MCF 10A (cell line): ENCODE measurements at regions of chr11 and their contacts with region 1.

Region 1: GRCh38 chr11:62665075-62665598 is at the starts of genes C11orf98 and CSKMT:
- DNase-seq: peak; percentile 92
- H3K4me3 Mint-ChIP-seq: peak within 1 kb of the TSS; percentile 98
- H3K27ac Mint-ChIP-seq: peak within 1 kb of the TSS; percentile 91
- H3K4me1 Mint-ChIP-seq: peaks cover 5% of the 10 kb centered on the region
- H3K27me3 Mint-ChIP-seq: no peaks in the 10 kb centered on the region
- CTCF ChIP-seq: no peak
- total RNA-seq, gene C11orf98: 81.2 and 91.6 TPM in 2 replicates
- total RNA-seq, gene CSKMT: 15.4 and 31.2 TPM in 2 replicates

Region 2: DNA sequence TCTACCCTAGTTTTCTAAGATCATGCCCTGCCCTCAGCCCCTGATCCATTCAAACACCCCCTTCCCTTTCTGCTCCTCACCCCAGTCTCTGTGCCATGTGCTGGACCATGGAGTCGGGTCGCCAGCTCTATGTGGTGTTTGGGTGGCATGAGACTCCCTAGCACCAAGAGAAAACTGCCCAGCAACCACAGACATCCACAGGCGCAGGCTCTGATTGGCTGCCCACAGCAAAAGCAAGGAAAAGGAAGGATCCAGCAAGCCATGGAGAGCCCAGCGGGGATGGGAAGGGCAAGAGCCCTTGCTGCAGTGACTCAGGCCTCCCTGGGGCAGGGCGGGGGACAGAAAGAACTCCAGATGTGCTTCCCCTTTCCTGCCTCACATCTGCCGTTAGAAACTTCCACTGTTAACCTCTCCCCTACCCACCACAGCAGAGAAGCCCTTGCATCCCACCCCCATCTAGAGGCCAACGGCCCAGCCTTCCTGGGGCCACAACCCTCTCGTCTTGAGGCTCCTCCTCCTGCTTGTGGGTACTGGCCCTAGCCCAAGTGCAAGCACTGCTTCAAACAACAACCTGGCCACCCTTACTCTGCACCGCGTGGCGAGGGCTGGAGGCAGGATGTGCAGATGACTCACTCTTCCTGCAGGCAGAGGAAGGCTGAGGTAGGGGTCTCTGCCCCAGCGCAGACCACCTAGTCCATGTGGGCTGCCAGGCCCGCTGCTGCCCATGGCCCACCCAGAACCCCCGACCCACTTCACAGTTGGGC is 108.8 kb before region 1 on chr11:
- CTCF ChIA-PET with region 1: no interaction called
- POLR2A ChIA-PET with region 1: interaction called, 13 read pairs
- intact Hi-C with region 1: no loop called
- DNase-seq: peak; percentile 97
- H3K4me3 Mint-ChIP-seq: peak overlapping the region; percentile 70
- H3K27ac Mint-ChIP-seq: peak overlapping the region; percentile 95
- H3K4me1 Mint-ChIP-seq: peaks cover 66% of the 10 kb centered on the region
- H3K27me3 Mint-ChIP-seq: no peaks in the 10 kb centered on the region
- CTCF ChIP-seq: no peak

Region 3: DNA sequence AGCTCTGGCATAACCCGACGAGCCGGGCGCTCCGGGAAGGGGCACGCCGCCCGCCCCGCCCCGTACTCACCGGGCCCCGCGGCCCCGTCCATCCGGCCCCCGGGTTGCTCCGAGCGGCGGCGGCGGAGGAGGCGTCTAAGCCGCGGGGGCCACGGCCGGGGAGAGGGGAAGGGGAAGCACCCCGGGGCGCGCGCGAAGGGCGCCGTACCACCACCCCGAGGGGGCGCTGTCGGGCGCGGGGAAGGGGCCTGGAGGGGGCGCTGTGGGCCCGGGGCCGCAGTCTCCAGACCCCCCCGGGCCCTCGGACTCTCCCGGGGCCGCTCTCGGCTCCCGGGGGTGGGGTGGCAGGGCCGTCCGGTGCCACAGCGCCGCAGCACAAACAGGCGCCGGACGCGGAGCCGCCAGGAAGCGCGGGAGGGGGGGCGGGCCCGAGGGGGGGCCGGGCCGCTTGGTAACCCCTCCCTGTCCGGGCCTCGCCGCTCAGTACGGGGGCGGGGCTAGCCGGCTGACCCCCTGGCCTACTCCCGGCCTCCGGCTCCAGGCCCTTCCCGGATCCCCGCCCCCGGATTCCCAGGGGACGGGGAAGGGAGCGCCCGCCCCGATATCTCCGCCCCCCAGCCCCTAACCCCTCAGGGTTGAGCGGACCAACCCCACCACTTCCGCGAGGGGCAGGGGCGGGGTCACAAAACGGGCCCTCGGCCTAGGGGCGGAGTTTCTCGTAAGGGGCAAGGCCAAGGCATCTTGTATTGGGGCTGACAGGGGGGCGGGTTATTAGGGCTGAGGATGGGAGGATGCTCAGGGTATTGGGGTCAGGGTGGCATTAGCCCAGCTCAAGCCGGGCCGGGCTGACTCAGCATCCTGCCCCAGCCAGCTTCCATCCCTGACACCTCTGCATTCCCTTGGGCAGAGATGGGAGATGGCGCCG is 52.5 kb before region 1 on chr11 and contains the starts of genes EML3 and ROM1:
- CTCF ChIA-PET with region 1: interaction called, 3 read pairs
- POLR2A ChIA-PET with region 1: interaction called, 14 read pairs
- intact Hi-C with region 1: no loop called
- DNase-seq: peak; percentile 89
- H3K4me3 Mint-ChIP-seq: peak within 1 kb of the TSS; percentile 90
- H3K27ac Mint-ChIP-seq: peak within 1 kb of the TSS; percentile 80
- H3K4me1 Mint-ChIP-seq: peaks cover 15% of the 10 kb centered on the region
- H3K27me3 Mint-ChIP-seq: no peaks in the 10 kb centered on the region
- CTCF ChIP-seq: peak; percentile 100
- total RNA-seq, gene EML3: 33.9 and 43.7 TPM in 2 replicates
- total RNA-seq, gene ROM1: 2.5 and 2.9 TPM in 2 replicates

Region 4: DNA sequence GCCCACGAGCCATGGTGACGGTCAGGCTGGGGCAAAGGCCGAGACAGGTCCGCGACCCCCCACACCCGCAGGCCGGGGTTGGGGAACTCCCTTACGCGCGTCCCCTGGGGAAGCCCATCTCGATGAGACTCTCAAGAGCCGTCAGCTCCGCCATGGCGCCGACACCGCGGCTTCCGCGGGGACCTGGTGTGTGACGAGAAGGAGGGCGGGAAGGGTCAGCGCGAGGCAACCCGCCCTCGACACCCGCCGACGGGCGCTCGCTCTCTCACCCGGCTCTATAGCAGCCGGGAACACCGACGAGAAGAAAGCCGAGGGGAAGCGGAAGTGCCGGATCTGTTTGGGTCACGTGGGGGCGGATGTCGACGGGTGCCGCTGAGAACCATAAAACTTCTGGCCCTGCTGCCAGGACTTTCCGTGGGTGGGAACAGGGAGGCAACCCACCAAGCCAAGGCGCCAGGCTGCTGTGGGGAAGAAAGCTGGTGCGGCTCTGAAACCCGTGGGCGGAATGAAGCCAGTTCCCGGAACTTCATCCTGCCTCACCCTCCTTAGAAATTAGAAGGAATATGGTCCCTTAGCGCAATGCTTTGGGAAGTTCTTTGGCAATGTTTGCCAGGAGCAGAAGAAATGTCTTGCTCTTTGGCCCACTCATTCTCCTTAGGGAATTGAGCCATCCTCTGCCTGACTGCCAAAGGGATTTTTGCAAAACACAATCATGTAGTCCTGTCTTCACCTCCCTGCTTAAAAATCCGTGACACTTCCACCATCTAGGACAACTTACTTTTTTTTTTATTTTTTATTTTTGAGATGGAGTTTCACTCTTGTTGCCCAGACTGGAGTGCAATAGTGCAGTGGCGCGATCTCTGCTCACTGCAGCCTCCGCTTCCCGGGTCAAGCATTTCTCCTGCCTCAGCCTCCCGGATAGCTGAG is 13.9 kb after region 1 on chr11 and contains the start of gene UBXN1:
- CTCF ChIA-PET with region 1: interaction called, 15 read pairs
- POLR2A ChIA-PET with region 1: interaction called, 132 read pairs
- intact Hi-C with region 1: no loop called
- DNase-seq: peak; percentile 89
- H3K4me3 Mint-ChIP-seq: peak within 1 kb of the TSS; percentile 72
- H3K27ac Mint-ChIP-seq: peak within 1 kb of the TSS; percentile 94
- H3K4me1 Mint-ChIP-seq: peaks cover 22% of the 10 kb centered on the region
- H3K27me3 Mint-ChIP-seq: no peaks in the 10 kb centered on the region
- CTCF ChIP-seq: no peak
- total RNA-seq, gene UBXN1: 146 and 153 TPM in 2 replicates

Region 5: GRCh38 chr11:62726915-62727763 is 62.0 kb after region 1 on chr11 and contains the start of gene HNRNPUL2:
- CTCF ChIA-PET with region 1: interaction called, 3 read pairs
- POLR2A ChIA-PET with region 1: interaction called, 182 read pairs
- intact Hi-C with region 1: no loop called
- DNase-seq: peak; percentile 97
- H3K4me3 Mint-ChIP-seq: peak within 1 kb of the TSS; percentile 92
- H3K27ac Mint-ChIP-seq: peak within 1 kb of the TSS; percentile 97
- H3K4me1 Mint-ChIP-seq: peaks cover 16% of the 10 kb centered on the region
- H3K27me3 Mint-ChIP-seq: no peaks in the 10 kb centered on the region
- CTCF ChIP-seq: no peak
- total RNA-seq, gene HNRNPUL2: 36.4 and 36.6 TPM in 2 replicates

Region 6: DNA sequence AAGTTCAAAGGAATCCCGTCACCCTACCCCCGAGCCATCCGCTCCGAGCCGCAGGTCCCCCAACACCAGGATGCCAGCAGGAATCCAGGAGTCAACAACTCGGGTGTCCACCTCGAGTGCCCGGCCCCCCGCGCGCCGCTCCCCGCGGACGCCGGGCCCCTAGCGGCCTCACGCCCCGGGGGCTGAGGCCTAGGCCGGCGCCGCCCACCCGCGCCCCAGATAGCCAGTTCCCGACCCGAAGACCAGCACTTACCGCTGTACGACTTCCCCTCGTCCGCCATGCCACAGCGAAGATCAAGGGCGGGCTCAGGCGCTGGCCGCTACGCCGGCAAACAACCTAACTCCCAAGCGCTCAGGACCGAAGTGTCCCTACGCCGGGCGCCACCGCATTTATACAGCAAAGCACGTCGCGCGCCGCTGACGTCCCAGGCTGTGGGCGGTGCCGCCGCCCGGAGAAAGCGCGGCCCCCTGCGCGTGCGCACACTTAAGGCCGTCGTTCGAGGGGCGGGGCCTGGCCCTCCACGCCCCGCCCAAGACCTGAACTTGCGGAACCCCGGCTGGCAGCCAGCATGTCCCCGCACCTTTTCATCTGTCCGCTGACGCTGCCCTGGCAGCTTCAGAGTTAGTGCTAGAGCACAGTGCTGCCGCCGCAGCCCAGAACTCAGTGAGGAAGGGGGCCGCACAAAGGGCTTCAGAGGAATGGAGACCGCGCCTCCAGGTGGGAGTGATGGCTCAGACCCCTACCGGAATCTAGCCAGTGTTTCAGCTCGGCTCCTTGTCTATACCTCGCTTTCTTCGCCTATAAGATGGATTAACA is 140.1 kb after region 1 on chr11 and contains the start of gene NXF1:
- CTCF ChIA-PET with region 1: no interaction called
- POLR2A ChIA-PET with region 1: interaction called, 12 read pairs
- intact Hi-C with region 1: no loop called
- DNase-seq: peak; percentile 93
- H3K4me3 Mint-ChIP-seq: peak within 1 kb of the TSS; percentile 95
- H3K27ac Mint-ChIP-seq: peak within 1 kb of the TSS; percentile 99
- H3K4me1 Mint-ChIP-seq: peaks cover 20% of the 10 kb centered on the region
- H3K27me3 Mint-ChIP-seq: no peaks in the 10 kb centered on the region
- CTCF ChIP-seq: no peak
- total RNA-seq, gene NXF1: 47.6 and 53.3 TPM in 2 replicates